A549 (cell line): ENCODE measurements at regions of chr15 and their contacts with region 1.

Region 1: GRCh38 chr15:63048115-63048775 is 5.7 kb downstream of the TPM1 start:
- DNase-seq: peak; percentile 96 to 98
- ATAC-seq: peak; percentile 69 to 76
- H3K4me3 ChIP-seq: peak overlapping the region; percentile 87
- H3K27ac ChIP-seq: peak overlapping the region; percentile 94 to 97
- H3K4me1 ChIP-seq: peaks cover 66% of the 10 kb centered on the region
- CTCF ChIP-seq: peak; percentile 98
- EP300 ChIP-seq: peak in 1 of 2 experiments; percentile 50; a peak in 1 of 5 replicates
- POLR2A ChIP-seq: peak; percentile 63
- RAD21 ChIP-seq: peak; percentile 75 to 94

Region 2: GRCh38 chr15:62742409-62743171 is 305.7 kb before region 1 on chr15:
- CTCF ChIA-PET with region 1: interaction called, 19 read pairs
- POLR2A ChIA-PET with region 1: interaction called, 7 read pairs
- DNase-seq: peak; percentile 70 to 84
- ATAC-seq: peak; percentile 75 to 87
- H3K4me3 ChIP-seq: peak overlapping the region; percentile 40
- H3K27ac ChIP-seq: peak overlapping the region; percentile 75 to 78
- H3K4me1 ChIP-seq: peaks cover 44% of the 10 kb centered on the region
- CTCF ChIP-seq: peak; percentile 96
- EP300 ChIP-seq: peak in 1 of 2 experiments; percentile 23; a peak in 1 of 5 replicates
- POLR2A ChIP-seq: no peak
- RAD21 ChIP-seq: peak; percentile 66 to 70

Region 3: GRCh38 chr15:62857411-62857853 is 190.8 kb before region 1 on chr15:
- CTCF ChIA-PET with region 1: interaction called, 20 read pairs
- POLR2A ChIA-PET with region 1: no interaction called
- DNase-seq: peak; percentile 23 to 47
- ATAC-seq: peak; percentile 35 to 46; a peak in 3 of 6 replicates
- H3K4me3 ChIP-seq: no peak overlapping the region
- H3K27ac ChIP-seq: peak overlapping the region; percentile 50 to 85
- H3K4me1 ChIP-seq: peaks cover 43% of the 10 kb centered on the region
- CTCF ChIP-seq: no peak
- EP300 ChIP-seq: no peak
- POLR2A ChIP-seq: no peak
- RAD21 ChIP-seq: no peak

Region 4: DNA sequence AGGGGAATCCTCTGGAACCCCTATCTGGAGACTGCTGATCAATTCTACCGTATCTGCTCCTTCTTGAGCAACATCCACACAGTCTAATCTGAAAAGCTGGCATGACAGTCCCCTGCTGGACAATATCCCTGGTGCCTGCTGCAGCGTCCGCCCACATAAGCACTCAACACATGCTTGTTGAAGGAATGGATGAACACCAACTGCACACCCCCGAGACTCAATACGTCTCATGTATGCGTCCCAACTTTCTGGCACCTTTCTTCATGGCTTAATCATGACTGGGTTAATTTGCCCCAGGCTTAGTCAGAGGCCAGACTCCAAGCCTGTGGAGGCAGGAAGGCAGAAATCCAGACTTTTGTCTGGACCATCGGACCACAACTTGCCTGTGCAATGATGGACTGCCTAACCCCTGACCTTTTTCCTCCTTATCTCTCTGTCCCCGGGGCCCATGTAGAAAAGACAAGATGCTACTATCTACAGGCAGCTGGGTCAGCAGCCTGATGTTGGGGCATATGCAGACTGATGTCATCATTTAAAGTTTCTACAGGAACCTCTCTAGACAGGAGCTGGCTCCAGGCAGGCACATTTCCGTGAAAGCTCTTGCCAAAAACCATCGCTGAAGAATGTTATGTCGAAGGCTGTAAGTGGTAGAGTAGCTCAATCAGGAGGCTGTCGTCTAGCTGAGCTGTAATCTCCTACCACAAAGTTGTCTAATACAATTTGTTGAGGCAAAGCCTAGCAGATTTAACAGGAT is 119.8 kb before region 1 on chr15:
- CTCF ChIA-PET with region 1: interaction called, 30 read pairs
- POLR2A ChIA-PET with region 1: interaction called, 6 read pairs
- DNase-seq: peak; percentile 76 to 87
- ATAC-seq: peak; percentile 88 to 93
- H3K4me3 ChIP-seq: no peak overlapping the region
- H3K27ac ChIP-seq: peak overlapping the region; percentile 79 to 89
- H3K4me1 ChIP-seq: peaks cover 42% of the 10 kb centered on the region
- CTCF ChIP-seq: peak; percentile 49; the same call in 2 of the 3 replicates
- EP300 ChIP-seq: peak; percentile 66 to 68; a peak in 3 of 5 replicates
- POLR2A ChIP-seq: no peak
- RAD21 ChIP-seq: peak; percentile 61 to 65

Region 5: GRCh38 chr15:63019539-63020109 is 28.6 kb before region 1 on chr15:
- CTCF ChIA-PET with region 1: interaction called, 17 read pairs
- POLR2A ChIA-PET with region 1: interaction called, 3 read pairs
- DNase-seq: peak; percentile 76 to 85
- ATAC-seq: peak; percentile 78 to 82
- H3K4me3 ChIP-seq: no peak overlapping the region
- H3K27ac ChIP-seq: peak overlapping the region; percentile 59 to 85
- H3K4me1 ChIP-seq: peaks cover 66% of the 10 kb centered on the region
- CTCF ChIP-seq: no peak
- EP300 ChIP-seq: peak in 1 of 2 experiments; percentile 23; a peak in 1 of 5 replicates
- POLR2A ChIP-seq: no peak
- RAD21 ChIP-seq: peak in 1 of 2 experiments; percentile 30; a peak in 1 of 5 replicates

Region 6: DNA sequence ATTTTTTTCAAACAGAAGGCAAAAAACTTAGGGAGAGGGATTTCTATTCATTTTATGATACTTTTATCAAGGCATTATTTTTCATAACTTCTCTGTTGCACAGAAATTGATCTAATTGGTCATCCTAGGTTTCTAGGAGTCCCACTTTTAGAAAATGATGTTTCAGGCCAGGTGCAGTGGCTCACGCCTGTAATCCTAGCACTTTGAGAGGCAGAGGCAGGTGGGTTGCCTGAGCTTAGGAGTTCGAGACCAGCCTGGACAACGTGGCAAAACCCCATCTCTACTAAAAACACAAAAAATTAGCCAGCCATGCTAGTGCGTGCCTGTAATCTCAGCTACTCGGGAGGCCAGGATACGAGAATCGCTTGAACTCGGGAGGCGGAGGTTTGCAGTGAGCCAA is 76.3 kb after region 1 on chr15:
- CTCF ChIA-PET with region 1: interaction called, 11 read pairs
- POLR2A ChIA-PET with region 1: no interaction called
- DNase-seq: no peak
- ATAC-seq: no peak
- H3K4me3 ChIP-seq: no peak overlapping the region
- H3K27ac ChIP-seq: no peak overlapping the region
- H3K4me1 ChIP-seq: peaks cover 14% of the 10 kb centered on the region; the same call in 2 of the 3 replicates
- CTCF ChIP-seq: no peak
- EP300 ChIP-seq: no peak
- POLR2A ChIP-seq: no peak
- RAD21 ChIP-seq: no peak

Region 7: DNA sequence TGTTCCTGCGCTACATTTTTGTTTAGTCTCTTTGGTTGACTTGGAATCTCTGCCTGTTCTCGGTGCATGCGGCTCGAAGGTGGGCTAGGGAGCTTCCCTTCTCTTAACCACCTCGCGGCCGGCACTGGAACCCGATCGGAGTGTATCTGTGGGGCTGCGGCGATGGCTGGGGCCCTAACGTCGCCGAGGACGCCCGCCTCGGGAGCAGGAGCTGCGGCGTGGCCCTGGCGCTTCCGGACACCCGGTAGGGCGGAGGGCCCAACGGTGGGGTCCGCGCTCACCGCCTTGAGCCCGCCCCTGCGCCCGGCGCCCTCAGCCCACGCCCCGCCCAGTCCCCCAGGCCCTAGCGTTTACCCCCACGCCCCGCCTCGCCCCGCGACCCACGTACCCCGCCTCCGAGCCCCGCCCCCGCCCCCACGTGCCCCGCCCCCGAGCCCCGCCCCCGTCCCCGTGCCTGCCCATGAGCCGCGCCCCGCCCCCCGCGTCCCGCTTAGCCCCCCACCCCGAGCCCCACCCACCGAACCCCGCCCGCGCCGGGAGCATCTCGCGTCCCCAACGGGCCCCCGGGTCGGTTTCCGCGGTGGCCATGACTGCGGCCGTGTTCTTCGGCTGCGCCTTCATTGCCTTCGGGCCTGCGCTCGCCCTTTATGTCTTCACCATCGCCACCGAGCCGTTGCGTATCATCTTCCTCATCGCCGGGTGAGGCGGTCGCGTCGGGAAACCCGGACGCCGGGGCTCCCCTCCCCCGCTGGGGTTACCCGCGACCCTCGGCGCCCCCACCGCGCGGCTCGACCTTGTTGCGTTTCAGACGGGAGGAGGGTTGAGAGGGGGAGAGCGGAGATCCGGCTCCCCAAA is 229.0 kb after region 1 on chr15 and contains the start of gene APH1B:
- CTCF ChIA-PET with region 1: interaction called, 8 read pairs
- POLR2A ChIA-PET with region 1: interaction called, 13 read pairs
- DNase-seq: peak; percentile 69 to 83
- ATAC-seq: peak; percentile 94
- H3K4me3 ChIP-seq: peak within 1 kb of the TSS; percentile 92
- H3K27ac ChIP-seq: peak within 1 kb of the TSS; percentile 88 to 94
- H3K4me1 ChIP-seq: peaks cover 24% of the 10 kb centered on the region
- CTCF ChIP-seq: no peak
- EP300 ChIP-seq: peak in 1 of 2 experiments; percentile 22; a peak in 1 of 5 replicates
- POLR2A ChIP-seq: peak; percentile 95
- RAD21 ChIP-seq: peak; percentile 12 to 38; a peak in 3 of 5 replicates
- polyA plus RNA-seq, gene APH1B: 25.3 and 28.5 TPM in 2 replicates

Region 8: GRCh38 chr15:63587527-63587926 is 539.3 kb after region 1 on chr15:
- CTCF ChIA-PET with region 1: no interaction called
- POLR2A ChIA-PET with region 1: no interaction called
- DNase-seq: peak in 1 of 2 experiments; percentile 58
- ATAC-seq: peak; percentile 27 to 53; a peak in 3 of 6 replicates
- H3K4me3 ChIP-seq: no peak overlapping the region
- H3K27ac ChIP-seq: peak overlapping the region in 1 of 2 experiments; percentile 37; a peak in 1 of 6 replicates
- H3K4me1 ChIP-seq: peaks cover 28% of the 10 kb centered on the region
- CTCF ChIP-seq: no peak
- EP300 ChIP-seq: peak in 1 of 2 experiments; percentile 4; a peak in 1 of 5 replicates
- POLR2A ChIP-seq: no peak
- RAD21 ChIP-seq: no peak